ENCODE measurements at regions of chr12 and their contacts with region 1.

Region 1: GRCh38 chr12:80556566-80556965 is 112.5 kb downstream of the PTPRQ start:
- DNase-seq: no peak
- H3K4me3 ChIP-seq: no peak overlapping the region
- H3K27ac ChIP-seq: no peak overlapping the region
- H3K4me1 ChIP-seq: no peaks in the 10 kb centered on the region
- H3K27me3 ChIP-seq: no peaks in the 10 kb centered on the region
- CTCF ChIP-seq: no peak
- POLR2A ChIP-seq: no peak

Region 2: GRCh38 chr12:78666584-78666983 is 1890.0 kb before region 1 on chr12:
- intact Hi-C with region 1: no loop called
- DNase-seq: no peak
- H3K4me3 ChIP-seq: no peak overlapping the region
- H3K27ac ChIP-seq: no peak overlapping the region
- H3K4me1 ChIP-seq: no peaks in the 10 kb centered on the region
- H3K27me3 ChIP-seq: no peaks in the 10 kb centered on the region
- CTCF ChIP-seq: no peak
- POLR2A ChIP-seq: no peak

Region 3: GRCh38 chr12:79961372-79961771 is 595.2 kb before region 1 on chr12:
- intact Hi-C with region 1: loop called (anchors 5 kb)
- DNase-seq: no peak
- H3K4me3 ChIP-seq: no peak overlapping the region
- H3K27ac ChIP-seq: no peak overlapping the region
- H3K4me1 ChIP-seq: no peaks in the 10 kb centered on the region
- H3K27me3 ChIP-seq: no peaks in the 10 kb centered on the region
- CTCF ChIP-seq: no peak
- POLR2A ChIP-seq: no peak